HepG2 (cell line): ENCODE measurements at regions of chr3 and their contacts with region 1.

Region 1: DNA sequence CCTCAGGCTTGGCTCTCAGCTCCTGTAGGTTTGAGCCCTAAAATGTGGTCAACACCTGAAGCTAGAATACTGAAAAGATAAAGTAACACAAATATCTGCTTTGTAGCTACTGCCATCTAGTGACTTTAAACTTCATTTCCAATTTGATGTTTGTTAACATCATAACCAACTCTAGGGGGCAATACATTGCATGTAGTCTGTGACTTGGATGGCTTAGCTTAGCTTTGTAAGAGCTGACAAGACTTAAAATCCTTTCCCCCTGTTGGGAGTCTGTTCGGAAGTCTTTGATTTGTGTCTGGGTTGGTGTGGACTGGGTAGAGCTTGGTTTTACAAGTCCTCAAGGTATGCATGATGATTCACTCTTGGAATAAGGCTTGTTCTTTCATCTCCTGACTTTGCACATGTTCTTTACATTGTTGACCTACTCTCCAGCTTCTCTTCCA is 51.7 kb downstream of the SCN11A start:
- DNase-seq: peak; percentile 60
- ATAC-seq: peak; percentile 82
- H3K4me3 ChIP-seq: no peak overlapping the region
- H3K27ac ChIP-seq: no peak overlapping the region
- H3K4me1 ChIP-seq: peaks cover under 1% of the 10 kb centered on the region; the same call in 1 of the 2 replicates
- H3K27me3 ChIP-seq: peaks cover 0 to 7% of the 10 kb centered on the region in 2 experiments; a peak in 2 of 5 replicates
- CTCF ChIP-seq: peak; percentile 88
- EP300 ChIP-seq: no peak
- POLR2A ChIP-seq: no peak
- RAD21 ChIP-seq: 0 out of 2 replicates have a peak, but pooled peaks have one; percentile 37

Region 2: GRCh38 chr3:38738630-38739395 is 261.2 kb before region 1 on chr3:
- CTCF ChIA-PET with region 1: interaction called, 6 read pairs
- POLR2A ChIA-PET with region 1: no interaction called
- in situ Hi-C with region 1: no loop called
- intact Hi-C with region 1: loop called (anchors 10 kb)
- DNase-seq: peak; percentile 27
- ATAC-seq: peak; percentile 78
- H3K4me3 ChIP-seq: no peak overlapping the region
- H3K27ac ChIP-seq: no peak overlapping the region
- H3K4me1 ChIP-seq: no peaks in the 10 kb centered on the region
- H3K27me3 ChIP-seq: peaks cover 0 to 1% of the 10 kb centered on the region in 2 experiments; a peak in 2 of 5 replicates
- CTCF ChIP-seq: peak; percentile 63
- EP300 ChIP-seq: no peak
- POLR2A ChIP-seq: no peak
- RAD21 ChIP-seq: no peak

Region 3: GRCh38 chr3:39025222-39025970 is 25.4 kb after region 1 on chr3:
- CTCF ChIA-PET with region 1: interaction called, 13 read pairs
- POLR2A ChIA-PET with region 1: no interaction called
- in situ Hi-C with region 1: no loop called
- intact Hi-C with region 1: loop called (anchors 2 kb)
- DNase-seq: no peak
- ATAC-seq: no peak
- H3K4me3 ChIP-seq: no peak overlapping the region
- H3K27ac ChIP-seq: no peak overlapping the region
- H3K4me1 ChIP-seq: peaks cover 2% of the 10 kb centered on the region; the same call in 1 of the 2 replicates
- H3K27me3 ChIP-seq: 0 out of 5 replicates have a peak, but pooled peaks cover 0 to 4% of the 10 kb centered on the region in 2 experiments
- CTCF ChIP-seq: no peak
- EP300 ChIP-seq: no peak
- POLR2A ChIP-seq: no peak
- RAD21 ChIP-seq: no peak

Region 4: GRCh38 chr3:39086144-39086543 is 86.1 kb after region 1 on chr3:
- CTCF ChIA-PET with region 1: no interaction called
- POLR2A ChIA-PET with region 1: no interaction called
- in situ Hi-C with region 1: no loop called
- intact Hi-C with region 1: no loop called
- DNase-seq: no peak
- ATAC-seq: no peak
- H3K4me3 ChIP-seq: no peak overlapping the region
- H3K27ac ChIP-seq: no peak overlapping the region
- H3K4me1 ChIP-seq: no peaks in the 10 kb centered on the region
- H3K27me3 ChIP-seq: no peaks in the 10 kb centered on the region
- CTCF ChIP-seq: no peak
- EP300 ChIP-seq: no peak
- POLR2A ChIP-seq: no peak
- RAD21 ChIP-seq: no peak